Activated naive CD4-positive, alpha-beta T cell treated with anti-CD3 and anti-CD28 coated beads for 36 hours (primary cell): ENCODE measurements at regions of chr1 and their contacts with region 1.

Region 1: GRCh38 chr1:246364415-246364941 is 142.6 kb downstream of the SMYD3 start:
- DNase-seq: no peak
- H3K4me3 Mint-ChIP-seq: peak overlapping the region; percentile 34
- H3K27ac Mint-ChIP-seq: peak overlapping the region; percentile 5
- H3K4me1 Mint-ChIP-seq: peaks cover 17% of the 10 kb centered on the region
- H3K27me3 Mint-ChIP-seq: no peaks in the 10 kb centered on the region

Region 2: GRCh38 chr1:246338546-246338945 is 25.9 kb before region 1 on chr1:
- CTCF ChIA-PET with region 1: no interaction called
- intact Hi-C with region 1: loop called (anchors 1 kb)
- DNase-seq: no peak
- H3K4me3 Mint-ChIP-seq: no peak overlapping the region
- H3K27ac Mint-ChIP-seq: peak overlapping the region; percentile 74
- H3K4me1 Mint-ChIP-seq: peaks cover 28% of the 10 kb centered on the region
- H3K27me3 Mint-ChIP-seq: no peaks in the 10 kb centered on the region